GM12878 (cell line): ENCODE measurements at regions of chr1 and their contacts with region 1.

Region 1: DNA sequence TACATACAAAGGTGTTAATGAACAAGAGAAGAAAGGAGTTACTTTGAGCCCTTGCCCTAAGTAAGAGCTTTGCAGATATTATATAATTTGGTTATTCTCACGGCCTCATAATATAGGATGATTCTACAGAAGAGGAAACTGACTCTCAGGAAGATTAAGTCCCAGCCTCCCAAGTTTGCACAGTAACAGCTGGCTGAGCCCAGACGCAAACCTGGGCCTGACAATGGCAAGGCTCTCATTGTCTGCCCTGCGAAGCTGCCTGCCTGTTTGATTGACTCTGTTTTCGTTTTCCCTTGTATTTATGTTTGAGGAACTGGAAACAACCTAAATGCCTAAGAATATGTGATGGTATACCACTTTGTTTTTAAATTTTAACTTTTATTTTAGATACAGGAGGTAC is 76.2 kb upstream of the PGBD5 start:
- DNase-seq: no peak
- ATAC-seq: no peak
- H3K4me3 ChIP-seq: no peak overlapping the region
- H3K27ac ChIP-seq: no peak overlapping the region
- H3K4me1 ChIP-seq: no peaks in the 10 kb centered on the region
- H3K27me3 ChIP-seq: no peaks in the 10 kb centered on the region
- CTCF ChIP-seq: no peak
- EP300 ChIP-seq: no peak
- POLR2A ChIP-seq: no peak
- RAD21 ChIP-seq: no peak

Region 2: DNA sequence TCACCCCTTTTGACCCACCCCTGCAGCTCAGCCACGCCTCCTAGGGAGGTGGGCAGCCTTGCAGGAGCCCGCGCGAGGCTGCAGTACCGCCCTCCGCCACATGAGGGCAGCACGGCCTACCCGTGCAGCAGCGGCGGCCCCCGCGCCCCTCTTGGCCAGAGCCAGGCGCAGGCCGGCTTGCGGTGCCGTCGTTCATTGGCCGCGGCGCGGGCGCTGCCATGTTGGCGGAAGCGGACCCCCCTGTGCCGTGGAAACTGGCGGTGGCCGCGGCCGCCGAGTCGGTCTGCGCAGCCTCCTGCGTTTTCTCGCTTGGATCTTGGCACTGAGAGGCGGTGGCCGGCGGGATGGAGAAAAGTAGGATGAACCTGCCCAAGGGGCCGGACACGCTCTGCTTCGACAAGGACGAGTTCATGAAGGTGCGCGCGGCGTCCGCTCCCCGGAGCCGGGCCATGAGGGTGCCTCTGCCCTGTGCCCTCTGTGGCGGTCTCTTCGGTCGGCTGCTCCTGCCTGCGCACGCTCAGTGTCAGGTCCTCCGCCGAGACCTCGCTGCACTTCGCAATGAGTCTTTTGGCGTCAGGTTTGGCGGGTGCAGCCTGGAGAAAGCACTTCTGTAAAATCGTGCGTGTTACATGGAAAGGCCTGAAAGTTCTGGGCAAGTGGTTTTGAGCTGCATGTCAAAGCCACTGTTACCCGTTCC is 140.1 kb after region 1 on chr1 and contains the start of gene COG2:
- CTCF ChIA-PET with region 1: no interaction called
- POLR2A ChIA-PET with region 1: interaction called, 10 read pairs
- RAD21 ChIA-PET with region 1: no interaction called
- SMC1A ChIA-PET with region 1: no interaction called
- in situ Hi-C with region 1: no loop called
- intact Hi-C with region 1: no loop called
- DNase-seq: peak; percentile 63
- ATAC-seq: peak; percentile 98
- H3K4me3 ChIP-seq: peak within 1 kb of the TSS; percentile 58
- H3K27ac ChIP-seq: peak within 1 kb of the TSS; percentile 76
- H3K4me1 ChIP-seq: peaks cover 16% of the 10 kb centered on the region; the same call in 1 of the 2 replicates
- H3K27me3 ChIP-seq: peaks cover 0 to 2% of the 10 kb centered on the region in 2 experiments; a peak in 2 of 4 replicates
- CTCF ChIP-seq: peak; percentile 99; a peak in 5 of 6 replicates
- EP300 ChIP-seq: no peak
- POLR2A ChIP-seq: peak; percentile 97
- RAD21 ChIP-seq: peak; percentile 42
- polyA plus RNA-seq, gene COG2: 15.0 to 16.7 TPM